T-cell (primary cell): ENCODE measurements at regions of chr1 and their contacts with region 1.

Region 1: DNA sequence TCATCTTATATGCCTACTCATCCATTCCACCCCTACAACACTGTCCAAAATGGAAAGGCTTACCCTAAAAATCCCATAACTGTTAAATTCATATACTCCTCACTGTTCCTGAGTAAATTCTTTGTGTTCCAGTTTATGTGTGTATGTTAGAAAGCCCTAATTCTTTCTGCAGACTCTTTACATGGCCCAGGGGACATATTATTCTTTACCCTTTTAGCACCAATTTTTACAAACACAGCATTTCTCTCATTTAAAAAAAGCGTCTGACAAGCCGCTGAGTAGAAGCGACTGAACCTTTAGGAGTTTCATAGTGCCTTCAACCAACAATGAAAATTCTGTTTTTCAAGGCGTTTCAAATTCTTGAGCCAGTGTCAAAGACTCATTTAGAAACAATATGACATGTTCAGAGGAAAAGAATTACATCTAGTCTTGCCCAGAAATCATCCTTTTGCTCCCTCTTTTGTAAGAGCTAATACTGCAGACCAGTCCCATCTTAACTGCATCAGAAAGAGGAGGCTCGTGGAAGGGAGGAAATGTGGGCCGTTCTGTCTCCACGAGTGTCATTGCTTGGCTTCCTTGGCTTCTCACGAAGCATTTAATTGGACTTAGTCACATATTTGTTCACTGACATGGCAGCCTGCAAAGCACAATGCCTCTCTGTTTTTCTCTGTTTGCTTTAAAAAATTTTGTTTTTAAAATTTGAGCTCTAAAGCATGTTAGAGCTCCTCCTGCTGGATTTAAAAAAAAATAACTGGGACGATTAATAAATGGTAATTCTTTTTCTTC is 21.3 kb upstream of the C1orf105 start:
- DNase-seq: peak in 14 of 35 experiments; percentile 4 to 64 (median 15)
- ATAC-seq: peak; percentile 61 to 73 (median 68)
- H3K4me3 ChIP-seq: no peak overlapping the region
- H3K4me3 Mint-ChIP-seq: peak overlapping the region; percentile 35 to 61 (median 59)
- H3K27ac ChIP-seq: no peak overlapping the region
- H3K27ac Mint-ChIP-seq: peak overlapping the region; percentile 82 to 87
- H3K4me1 ChIP-seq: peaks cover 22 to 49% of the 10 kb centered on the region in 2 experiments
- H3K4me1 Mint-ChIP-seq: peaks cover 63 to 78% (median 74%) of the 10 kb centered on the region in 3 donors
- H3K27me3 ChIP-seq: no peaks in the 10 kb centered on the region
- H3K27me3 Mint-ChIP-seq: no peaks in the 10 kb centered on the region

Region 2: DNA sequence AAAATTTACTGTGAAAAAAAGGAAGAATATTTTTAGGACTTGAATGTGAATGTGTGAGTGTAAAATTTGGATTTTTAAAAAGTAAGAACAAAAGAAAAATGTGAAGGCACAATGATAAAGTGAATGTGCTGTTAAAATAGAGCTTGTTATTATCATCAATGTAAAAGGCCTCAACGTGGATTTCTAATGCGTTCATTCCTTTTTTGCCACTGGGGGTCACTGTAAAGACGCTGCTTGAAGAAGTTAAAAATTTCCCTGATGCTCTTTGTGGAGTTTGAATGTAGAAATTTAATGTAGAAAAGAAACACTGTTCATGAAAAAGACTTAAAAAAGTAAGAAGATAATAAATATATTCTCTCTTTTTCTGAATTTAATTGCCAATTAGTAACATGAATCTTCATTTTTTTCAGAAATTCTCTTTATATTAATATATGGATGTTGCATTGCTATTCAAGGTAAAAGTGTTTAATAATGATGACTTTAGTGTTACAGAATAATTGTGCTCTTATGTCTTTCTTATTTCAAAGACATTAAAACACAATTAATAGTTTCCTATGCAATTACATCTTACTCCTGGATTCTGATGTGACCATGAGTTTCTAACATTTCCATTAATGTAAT is 396.3 kb before region 1 on chr1:
- CTCF ChIA-PET with region 1: interaction called, 8 to 44 read pairs
- POLR2A ChIA-PET with region 1: no interaction called
- DNase-seq: peak in 17 of 35 experiments; percentile 1 to 62 (median 11)
- ATAC-seq: peak in 1 of 4 experiments; percentile 32
- H3K4me3 ChIP-seq: no peak overlapping the region
- H3K4me3 Mint-ChIP-seq: no peak overlapping the region
- H3K27ac ChIP-seq: no peak overlapping the region
- H3K27ac Mint-ChIP-seq: no peak overlapping the region
- H3K4me1 ChIP-seq: no peaks in the 10 kb centered on the region
- H3K4me1 Mint-ChIP-seq: peaks cover 6 to 11% (median 11%) of the 10 kb centered on the region in 3 donors
- H3K27me3 ChIP-seq: no peaks in the 10 kb centered on the region
- H3K27me3 Mint-ChIP-seq: no peaks in the 10 kb centered on the region

Region 3: DNA sequence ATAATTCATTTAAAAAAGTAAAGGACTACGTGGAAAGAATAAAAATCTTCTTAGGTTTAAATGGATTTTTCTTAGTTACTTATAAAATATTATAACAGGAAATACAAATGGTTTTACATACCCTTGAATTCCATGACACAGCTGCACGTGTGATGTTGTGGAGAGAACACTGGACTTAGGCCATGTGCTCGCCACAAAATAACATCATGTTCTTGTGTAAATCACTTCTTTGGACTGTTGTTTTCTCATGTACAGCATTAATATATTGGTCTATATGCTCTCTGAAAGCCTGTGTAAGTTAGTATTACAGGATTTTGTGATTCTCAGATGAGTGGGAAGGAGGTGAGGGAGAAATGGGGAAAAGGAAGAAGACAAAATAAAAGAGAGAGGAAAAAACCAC is 329.6 kb before region 1 on chr1:
- CTCF ChIA-PET with region 1: no interaction called
- POLR2A ChIA-PET with region 1: no interaction called
- DNase-seq: no peak
- ATAC-seq: no peak
- H3K4me3 ChIP-seq: no peak overlapping the region
- H3K4me3 Mint-ChIP-seq: no peak overlapping the region
- H3K27ac ChIP-seq: no peak overlapping the region
- H3K27ac Mint-ChIP-seq: no peak overlapping the region
- H3K4me1 ChIP-seq: no peaks in the 10 kb centered on the region
- H3K4me1 Mint-ChIP-seq: no peaks in the 10 kb centered on the region
- H3K27me3 ChIP-seq: no peaks in the 10 kb centered on the region
- H3K27me3 Mint-ChIP-seq: no peaks in the 10 kb centered on the region

Region 4: DNA sequence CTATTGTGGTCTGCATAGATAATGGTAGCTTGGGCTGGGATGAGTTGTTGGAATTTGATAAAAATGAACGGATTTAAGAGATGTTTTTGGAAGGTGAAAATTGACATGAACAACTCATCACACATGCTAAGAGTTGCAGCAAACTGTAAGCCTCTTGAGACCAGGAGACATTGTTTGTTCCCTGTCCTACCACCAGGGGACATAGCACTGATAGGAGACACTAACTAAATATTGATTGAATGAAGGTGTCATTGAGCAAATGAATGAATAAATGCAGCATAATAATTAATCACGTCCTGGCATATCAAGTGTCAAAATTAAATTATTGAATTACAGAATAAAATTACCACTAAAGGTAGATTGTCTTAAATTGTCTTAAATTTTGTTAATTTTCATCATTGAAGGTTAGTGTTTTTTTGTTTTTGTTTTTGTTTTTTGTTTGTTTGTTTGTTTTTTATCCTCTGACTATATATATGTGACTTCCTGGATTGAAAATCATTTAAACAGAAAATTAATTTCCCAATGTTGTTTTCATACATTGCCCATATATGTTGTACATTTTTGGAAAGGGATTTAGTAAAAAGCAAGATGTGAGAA is 264.0 kb before region 1 on chr1:
- CTCF ChIA-PET with region 1: interaction called, 3 to 19 read pairs
- POLR2A ChIA-PET with region 1: no interaction called
- DNase-seq: peak in 22 of 35 experiments; percentile 3 to 64 (median 12)
- ATAC-seq: peak in 1 of 4 experiments; percentile 42
- H3K4me3 ChIP-seq: no peak overlapping the region
- H3K4me3 Mint-ChIP-seq: no peak overlapping the region
- H3K27ac ChIP-seq: no peak overlapping the region
- H3K27ac Mint-ChIP-seq: no peak overlapping the region
- H3K4me1 ChIP-seq: no peaks in the 10 kb centered on the region
- H3K4me1 Mint-ChIP-seq: peaks cover 5 to 12% (median 10%) of the 10 kb centered on the region in 3 donors
- H3K27me3 ChIP-seq: no peaks in the 10 kb centered on the region
- H3K27me3 Mint-ChIP-seq: no peaks in the 10 kb centered on the region

Region 5: DNA sequence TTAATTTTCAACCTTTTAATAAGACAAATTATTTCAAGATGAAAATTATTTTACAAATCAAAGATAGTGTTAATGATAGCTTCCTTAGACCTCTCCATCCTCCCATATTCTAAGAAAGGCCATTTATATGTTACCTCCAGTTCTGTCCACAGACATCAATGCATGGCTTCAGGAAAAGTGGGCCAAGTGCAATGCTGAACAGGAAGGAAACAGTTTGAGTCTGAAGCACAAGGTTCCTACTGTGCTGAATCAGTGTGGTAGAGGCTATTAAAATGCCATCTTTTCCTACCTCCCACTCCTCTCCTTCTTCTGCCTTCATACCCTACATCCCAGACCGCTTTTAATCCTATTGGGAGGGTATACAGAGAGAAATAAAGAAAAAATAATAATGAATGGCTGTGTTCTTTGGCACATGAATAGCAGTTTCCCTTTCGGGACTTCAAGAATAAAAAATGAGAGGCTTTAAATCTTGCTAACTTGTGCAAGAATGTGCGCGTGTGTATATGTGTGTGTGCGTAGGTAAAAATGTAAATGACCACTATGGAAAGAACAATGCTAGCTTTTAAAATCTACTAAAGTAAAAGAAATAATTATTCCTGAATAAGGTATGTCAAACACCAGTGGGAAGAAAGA is 41.3 kb before region 1 on chr1:
- CTCF ChIA-PET with region 1: interaction called, 12 to 18 read pairs
- POLR2A ChIA-PET with region 1: interaction called in 1 of 2 experiments, 3 read pairs
- DNase-seq: peak in 4 of 35 experiments; percentile 0 to 31 (median 3)
- ATAC-seq: peak; percentile 5 to 30 (median 14)
- H3K4me3 ChIP-seq: peak overlapping the region in 1 of 2 donors; percentile 2
- H3K4me3 Mint-ChIP-seq: peak overlapping the region; percentile 42 to 67 (median 56)
- H3K27ac ChIP-seq: peak overlapping the region; percentile 63
- H3K27ac Mint-ChIP-seq: peak overlapping the region; percentile 91 to 97
- H3K4me1 ChIP-seq: peaks cover 24 to 26% of the 10 kb centered on the region in 2 experiments
- H3K4me1 Mint-ChIP-seq: peaks cover 57 to 58% (median 58%) of the 10 kb centered on the region in 3 donors
- H3K27me3 ChIP-seq: no peaks in the 10 kb centered on the region
- H3K27me3 Mint-ChIP-seq: no peaks in the 10 kb centered on the region